Caco-2 (cell line): ENCODE measurements at regions of chr3 and their contacts with region 1.

Region 1: DNA sequence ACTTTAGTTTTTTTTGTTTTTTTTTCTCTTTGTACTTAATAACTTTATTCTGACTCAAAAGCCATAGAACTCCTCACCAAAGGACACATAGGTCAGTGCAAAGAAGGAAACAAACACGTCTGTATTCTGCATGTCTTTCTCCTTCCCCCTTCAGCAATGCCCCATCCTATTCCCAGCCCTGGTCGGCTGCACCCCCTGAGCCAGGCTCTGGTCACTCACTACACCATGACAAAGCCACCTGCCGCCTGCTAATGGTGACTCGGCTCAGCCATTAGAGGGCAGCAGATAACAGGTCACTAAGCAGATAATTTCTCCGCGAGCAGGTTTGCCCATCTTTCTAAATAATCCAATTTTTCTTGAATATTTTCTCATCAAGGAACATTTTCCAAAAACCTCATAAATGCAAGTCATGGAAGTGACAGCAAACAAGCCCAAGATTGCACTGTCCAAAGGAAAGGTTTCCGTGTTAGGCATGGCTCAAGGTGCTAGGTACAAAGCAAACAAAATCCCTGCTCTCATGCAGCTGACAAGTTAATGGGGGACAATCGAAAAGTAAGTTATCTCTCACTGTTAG is 37.8 kb downstream of the TM4SF4 start:
- DNase-seq: peak; percentile 70 to 76
- H3K4me3 ChIP-seq: no peak overlapping the region
- H3K4me3 Mint-ChIP-seq: peak overlapping the region; percentile 17
- H3K27ac Mint-ChIP-seq: peak overlapping the region; percentile 22
- H3K4me1 ChIP-seq: peaks cover 23% of the 10 kb centered on the region
- H3K4me1 Mint-ChIP-seq: peaks cover 19% of the 10 kb centered on the region
- H3K27me3 ChIP-seq: no peaks in the 10 kb centered on the region
- H3K27me3 Mint-ChIP-seq: no peaks in the 10 kb centered on the region
- CTCF ChIP-seq: peak; percentile 75 to 86

Region 2: DNA sequence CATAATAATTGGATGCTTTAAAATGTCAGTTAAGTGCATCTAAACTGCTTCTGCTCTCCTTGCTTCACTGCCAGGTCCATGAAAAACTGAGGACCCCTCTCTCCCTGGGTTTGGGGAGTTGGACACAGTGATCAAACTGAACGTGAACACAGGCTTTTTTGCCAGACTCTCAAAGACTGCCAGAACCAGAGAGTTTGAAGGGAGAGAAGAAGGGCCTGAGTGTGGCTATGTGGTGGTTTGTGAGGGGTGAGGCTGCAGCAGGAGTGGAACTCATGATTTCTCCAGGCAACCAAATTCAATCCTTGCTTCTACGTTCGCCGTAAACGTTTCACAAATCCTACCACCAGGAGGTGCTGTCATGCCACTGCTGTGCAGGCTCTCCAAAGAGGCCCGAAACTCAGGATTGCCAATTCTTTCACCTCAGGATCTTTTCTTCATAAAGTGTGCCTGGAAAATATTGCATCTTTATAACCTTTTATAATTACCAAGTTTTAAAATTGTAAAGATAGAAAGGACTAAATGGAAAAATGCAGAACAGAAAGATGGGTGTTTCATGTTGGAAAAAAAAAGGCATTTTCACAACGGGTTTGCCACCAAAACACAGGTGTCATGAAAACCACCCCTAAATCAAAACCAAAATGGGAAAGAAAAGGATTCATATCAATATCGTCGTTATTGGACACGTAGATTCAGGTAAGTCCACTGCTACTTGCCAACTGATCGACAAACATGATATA is 18.1 kb before region 1 on chr3:
- CTCF ChIA-PET with region 1: no interaction called
- POLR2A ChIA-PET with region 1: no interaction called
- intact Hi-C with region 1: loop called (anchors 2 kb)
- DNase-seq: peak; percentile 53 to 76
- H3K4me3 ChIP-seq: no peak overlapping the region
- H3K4me3 Mint-ChIP-seq: no peak overlapping the region
- H3K27ac Mint-ChIP-seq: no peak overlapping the region
- H3K4me1 ChIP-seq: no peaks in the 10 kb centered on the region
- H3K4me1 Mint-ChIP-seq: no peaks in the 10 kb centered on the region
- H3K27me3 ChIP-seq: no peaks in the 10 kb centered on the region
- H3K27me3 Mint-ChIP-seq: no peaks in the 10 kb centered on the region
- CTCF ChIP-seq: peak; percentile 65 to 71

Region 3: GRCh38 chr3:149752051-149752787 is 239.9 kb after region 1 on chr3 and contains the start of gene COMMD2:
- CTCF ChIA-PET with region 1: no interaction called
- POLR2A ChIA-PET with region 1: no interaction called
- intact Hi-C with region 1: loop called (anchors 1 kb)
- DNase-seq: peak; percentile 86 to 90
- H3K4me3 ChIP-seq: peak within 1 kb of the TSS; percentile 64
- H3K4me3 Mint-ChIP-seq: peak within 1 kb of the TSS; percentile 96
- H3K27ac Mint-ChIP-seq: peak within 1 kb of the TSS; percentile 96
- H3K4me1 ChIP-seq: no peaks in the 10 kb centered on the region
- H3K4me1 Mint-ChIP-seq: no peaks in the 10 kb centered on the region
- H3K27me3 ChIP-seq: no peaks in the 10 kb centered on the region
- H3K27me3 Mint-ChIP-seq: no peaks in the 10 kb centered on the region
- CTCF ChIP-seq: peak; percentile 13 to 36
- total RNA-seq, gene COMMD2: 42.6 and 43.3 TPM in 2 replicates

Region 4: DNA sequence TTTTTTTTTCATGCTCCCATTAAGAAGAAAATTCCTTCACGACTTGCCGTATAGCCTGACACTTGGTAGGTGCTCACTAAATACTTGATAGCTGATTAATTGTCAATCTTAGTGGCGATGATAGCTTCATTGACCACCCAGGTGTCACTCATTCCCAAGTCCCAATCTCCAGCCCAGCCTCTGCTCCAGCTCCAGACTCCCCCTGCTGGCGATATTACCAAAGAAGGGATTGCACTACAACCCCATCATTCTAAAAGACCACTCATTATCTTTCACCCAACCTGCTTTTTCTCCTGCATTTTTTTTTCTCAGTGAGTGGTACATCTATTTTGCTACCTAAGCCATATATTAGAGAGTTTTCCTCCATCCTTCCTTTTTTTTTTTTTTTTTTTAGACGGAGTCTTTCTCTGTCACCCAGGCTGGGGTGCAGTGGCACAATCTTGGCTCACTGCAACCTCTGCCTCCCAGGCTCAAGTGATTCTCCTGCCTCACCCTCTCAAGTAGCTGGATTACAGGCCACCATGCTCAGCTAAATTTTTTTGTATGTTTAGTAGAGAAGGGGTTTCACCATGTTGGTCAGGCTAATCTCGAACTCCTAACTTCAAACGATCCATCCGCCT is 259.5 kb after region 1 on chr3:
- CTCF ChIA-PET with region 1: no interaction called
- POLR2A ChIA-PET with region 1: no interaction called
- intact Hi-C with region 1: loop called (anchors 5 kb)
- DNase-seq: peak; percentile 45 to 70
- H3K4me3 ChIP-seq: no peak overlapping the region
- H3K4me3 Mint-ChIP-seq: no peak overlapping the region
- H3K27ac Mint-ChIP-seq: no peak overlapping the region
- H3K4me1 ChIP-seq: peaks cover 11% of the 10 kb centered on the region; the same call in 1 of the 2 replicates
- H3K4me1 Mint-ChIP-seq: peaks cover 14% of the 10 kb centered on the region
- H3K27me3 ChIP-seq: no peaks in the 10 kb centered on the region
- H3K27me3 Mint-ChIP-seq: no peaks in the 10 kb centered on the region
- CTCF ChIP-seq: peak; percentile 83 to 84